CD8-positive, alpha-beta T cell (primary cell): ENCODE measurements at regions of chr4 and their contacts with region 1.

Region 1: GRCh38 chr4:184474263-184475095 is at the start of gene IRF2:
- DNase-seq: peak; percentile 91 to 99 (median 95)
- ATAC-seq: peak; percentile 82
- H3K4me3 ChIP-seq: peak within 1 kb of the TSS; percentile 78 to 93
- H3K4me3 Mint-ChIP-seq: peak within 1 kb of the TSS; percentile 98
- H3K27ac ChIP-seq: peak within 1 kb of the TSS; percentile 94 to 95
- H3K27ac Mint-ChIP-seq: peak within 1 kb of the TSS; percentile 99
- H3K4me1 ChIP-seq: peaks cover 38% of the 10 kb centered on the region
- H3K4me1 Mint-ChIP-seq: peaks cover 67% of the 10 kb centered on the region
- H3K27me3 ChIP-seq: no peaks in the 10 kb centered on the region
- H3K27me3 Mint-ChIP-seq: no peaks in the 10 kb centered on the region
- CTCF ChIP-seq: no peak
- total RNA-seq, gene IRF2: 7.9 to 9.3 TPM

Region 2: GRCh38 chr4:184395971-184396391 is 78.5 kb before region 1 on chr4:
- CTCF ChIA-PET with region 1: no interaction called
- POLR2A ChIA-PET with region 1: no interaction called
- intact Hi-C with region 1: no loop called
- DNase-seq: no peak
- ATAC-seq: no peak
- H3K4me3 ChIP-seq: no peak overlapping the region
- H3K4me3 Mint-ChIP-seq: no peak overlapping the region
- H3K27ac ChIP-seq: no peak overlapping the region
- H3K27ac Mint-ChIP-seq: no peak overlapping the region
- H3K4me1 ChIP-seq: no peaks in the 10 kb centered on the region
- H3K4me1 Mint-ChIP-seq: no peaks in the 10 kb centered on the region
- H3K27me3 ChIP-seq: no peaks in the 10 kb centered on the region
- H3K27me3 Mint-ChIP-seq: no peaks in the 10 kb centered on the region
- CTCF ChIP-seq: no peak

Region 3: DNA sequence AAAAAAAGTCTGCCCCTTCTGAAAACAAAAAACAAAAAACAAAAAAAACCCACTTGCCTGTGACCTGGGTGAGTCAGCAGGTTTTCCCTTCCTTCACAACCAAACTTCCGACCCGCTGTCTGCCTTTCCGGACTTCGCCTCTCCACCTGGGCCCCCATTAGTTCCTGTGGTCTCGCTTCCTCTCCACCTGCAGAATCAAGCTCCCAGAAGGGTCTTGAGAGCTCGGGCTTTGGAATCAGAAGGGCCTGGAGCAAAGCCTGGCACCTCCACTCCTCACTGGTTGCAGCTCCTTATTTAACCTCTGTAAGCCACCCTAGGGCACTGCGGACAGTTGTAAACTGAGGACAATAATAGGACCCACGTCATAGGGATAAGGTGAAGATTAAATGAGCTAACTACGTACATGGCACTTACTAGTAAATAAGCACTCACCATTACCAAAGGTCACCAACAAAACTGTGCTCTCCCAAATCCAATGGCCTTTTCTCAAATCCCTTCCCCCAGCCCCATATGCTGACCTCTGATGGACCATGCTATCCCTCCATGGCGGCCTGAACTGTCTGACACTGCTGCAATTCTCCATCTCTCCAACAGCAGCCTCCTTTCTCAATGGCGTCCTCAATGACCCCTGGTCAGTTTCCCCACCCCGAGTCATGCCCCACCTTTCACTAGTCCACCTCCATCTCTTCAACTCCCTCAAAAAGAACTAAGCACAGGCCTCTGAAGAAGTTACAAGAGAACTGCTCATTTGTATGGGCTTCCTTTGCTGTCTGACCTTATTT is 64.4 kb before region 1 on chr4:
- CTCF ChIA-PET with region 1: no interaction called
- POLR2A ChIA-PET with region 1: interaction called, 5 read pairs
- intact Hi-C with region 1: loop called (anchors 2 kb)
- DNase-seq: peak; percentile 3 to 74 (median 57)
- ATAC-seq: peak; percentile 71
- H3K4me3 ChIP-seq: no peak overlapping the region
- H3K4me3 Mint-ChIP-seq: peak overlapping the region; percentile 54
- H3K27ac ChIP-seq: peak overlapping the region in 1 of 2 experiments; percentile 54
- H3K27ac Mint-ChIP-seq: peak overlapping the region; percentile 86
- H3K4me1 ChIP-seq: peaks cover 18% of the 10 kb centered on the region
- H3K4me1 Mint-ChIP-seq: peaks cover 53% of the 10 kb centered on the region
- H3K27me3 ChIP-seq: no peaks in the 10 kb centered on the region
- H3K27me3 Mint-ChIP-seq: no peaks in the 10 kb centered on the region
- CTCF ChIP-seq: no peak

Region 4: DNA sequence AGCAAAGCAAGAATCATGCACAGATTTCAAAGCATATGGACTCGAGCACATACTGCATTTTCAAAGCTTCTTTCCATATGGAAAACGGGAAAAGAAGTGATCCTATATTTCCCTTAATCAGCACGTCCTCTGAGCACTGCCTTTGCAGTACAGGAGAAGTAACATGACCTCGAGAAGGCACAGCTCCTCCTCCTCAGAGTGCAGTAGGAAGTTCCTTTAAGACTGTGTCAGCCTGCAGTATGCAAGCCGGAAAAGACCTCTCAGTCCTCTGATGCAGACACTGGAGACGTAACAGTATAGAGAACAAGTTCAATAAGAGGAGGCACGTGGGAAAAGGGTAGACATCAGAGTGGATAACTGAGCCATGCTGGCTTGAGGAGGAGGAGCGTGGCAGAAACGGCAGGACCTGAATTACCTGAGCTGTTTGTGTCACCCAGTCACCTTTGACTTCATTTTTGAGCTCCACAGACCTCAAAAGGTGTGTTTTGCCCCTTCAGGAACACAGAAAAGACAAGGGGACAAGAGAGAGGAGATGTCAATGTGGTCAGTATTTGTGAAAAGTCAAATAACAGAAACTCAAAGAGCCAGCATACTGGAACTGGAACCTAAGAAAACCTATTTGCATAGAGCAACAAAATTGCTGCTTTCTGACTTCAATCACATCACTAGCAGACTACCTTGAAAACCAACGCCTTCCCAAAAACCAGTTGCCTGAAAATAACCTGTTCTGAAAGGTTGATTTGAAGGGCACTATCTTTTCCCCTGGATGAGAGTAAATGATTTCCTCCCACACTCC is 20.9 kb before region 1 on chr4:
- CTCF ChIA-PET with region 1: interaction called, 3 read pairs
- POLR2A ChIA-PET with region 1: interaction called, 7 read pairs
- intact Hi-C with region 1: loop called in 1 of 2 experiments (anchors 2 kb)
- DNase-seq: peak in 7 of 9 experiments; percentile 16 to 82 (median 57)
- ATAC-seq: peak; percentile 98
- H3K4me3 ChIP-seq: no peak overlapping the region
- H3K4me3 Mint-ChIP-seq: peak overlapping the region; percentile 40
- H3K27ac ChIP-seq: peak overlapping the region; percentile 25 to 78
- H3K27ac Mint-ChIP-seq: peak overlapping the region; percentile 97
- H3K4me1 ChIP-seq: peaks cover 35% of the 10 kb centered on the region
- H3K4me1 Mint-ChIP-seq: peaks cover 84% of the 10 kb centered on the region
- H3K27me3 ChIP-seq: no peaks in the 10 kb centered on the region
- H3K27me3 Mint-ChIP-seq: no peaks in the 10 kb centered on the region
- CTCF ChIP-seq: no peak

Region 5: GRCh38 chr4:184538023-184538599 is 63.6 kb after region 1 on chr4:
- CTCF ChIA-PET with region 1: interaction called, 4 read pairs
- POLR2A ChIA-PET with region 1: interaction called, 65 read pairs
- intact Hi-C with region 1: loop called (anchors 1 kb)
- DNase-seq: peak; percentile 38 to 88 (median 65)
- ATAC-seq: peak; percentile 45
- H3K4me3 ChIP-seq: peak overlapping the region; percentile 57 to 63
- H3K4me3 Mint-ChIP-seq: peak overlapping the region; percentile 91
- H3K27ac ChIP-seq: peak overlapping the region; percentile 84 to 90
- H3K27ac Mint-ChIP-seq: peak overlapping the region; percentile 100
- H3K4me1 ChIP-seq: peaks cover 33% of the 10 kb centered on the region
- H3K4me1 Mint-ChIP-seq: peaks cover 46% of the 10 kb centered on the region
- H3K27me3 ChIP-seq: no peaks in the 10 kb centered on the region
- H3K27me3 Mint-ChIP-seq: no peaks in the 10 kb centered on the region
- CTCF ChIP-seq: peak; percentile 36

Region 6: DNA sequence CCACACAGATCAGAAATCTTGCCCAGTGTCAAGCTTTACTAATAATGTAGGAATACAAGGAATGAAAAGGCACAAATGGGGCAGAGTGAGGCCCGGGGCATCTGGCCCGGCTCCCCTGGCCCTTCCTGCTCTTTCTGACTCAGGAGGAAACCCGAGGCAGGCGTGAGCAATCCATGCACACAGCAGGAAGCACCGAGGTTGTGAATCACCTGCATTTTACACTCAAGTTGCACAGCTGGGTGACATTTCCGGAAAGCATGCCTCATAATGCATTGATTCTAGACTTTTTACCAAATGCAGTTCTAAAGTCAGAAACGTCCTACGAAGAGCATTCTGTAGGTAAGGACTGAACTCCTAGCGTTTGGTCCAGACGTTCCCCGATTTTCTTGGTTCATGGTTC is 214.0 kb after region 1 on chr4:
- CTCF ChIA-PET with region 1: no interaction called
- POLR2A ChIA-PET with region 1: no interaction called
- intact Hi-C with region 1: no loop called
- DNase-seq: no peak
- ATAC-seq: no peak
- H3K4me3 ChIP-seq: no peak overlapping the region
- H3K4me3 Mint-ChIP-seq: no peak overlapping the region
- H3K27ac ChIP-seq: no peak overlapping the region
- H3K27ac Mint-ChIP-seq: no peak overlapping the region
- H3K4me1 ChIP-seq: no peaks in the 10 kb centered on the region
- H3K4me1 Mint-ChIP-seq: peaks cover 5% of the 10 kb centered on the region
- H3K27me3 ChIP-seq: no peaks in the 10 kb centered on the region
- H3K27me3 Mint-ChIP-seq: no peaks in the 10 kb centered on the region
- CTCF ChIP-seq: no peak

Region 7: DNA sequence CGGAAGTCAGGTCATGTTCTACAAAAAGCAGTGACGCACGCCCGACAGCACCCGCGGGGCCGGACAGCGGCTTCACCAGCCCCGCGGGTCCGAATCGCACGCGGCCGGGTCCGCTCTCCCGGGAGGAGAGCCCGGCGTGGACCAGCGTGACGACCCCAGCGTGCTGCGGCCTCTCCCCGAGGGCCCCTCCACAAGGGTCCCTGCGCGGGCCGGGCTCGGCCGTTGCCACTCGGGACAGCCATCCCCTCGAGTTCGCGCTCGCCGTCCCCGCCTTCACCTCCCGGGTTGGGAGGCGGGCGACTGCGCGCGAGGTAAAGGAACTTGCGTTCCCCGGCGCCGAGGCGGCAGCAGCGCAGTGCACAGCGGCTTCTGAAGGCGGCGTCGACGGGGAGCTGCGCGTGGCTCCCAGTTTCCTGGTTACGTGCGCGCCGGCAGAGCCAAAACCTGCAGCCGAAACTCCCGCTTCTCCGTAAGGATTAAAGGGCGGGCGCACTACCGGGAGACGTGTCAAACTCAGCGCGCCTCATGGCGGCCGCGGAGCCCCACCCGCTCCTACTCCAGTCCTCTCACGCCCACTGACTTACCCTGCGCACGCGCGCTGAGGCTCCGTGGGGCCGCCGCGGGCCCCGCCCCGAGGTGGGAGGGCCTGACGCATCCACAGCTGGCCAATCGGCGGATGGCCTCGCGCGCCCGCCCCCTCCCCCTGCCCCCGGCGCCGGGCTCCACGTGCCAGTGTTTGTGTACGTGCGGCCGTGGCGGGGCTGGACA is 921.7 kb after region 1 on chr4:
- CTCF ChIA-PET with region 1: no interaction called
- POLR2A ChIA-PET with region 1: no interaction called
- intact Hi-C with region 1: loop called in 1 of 2 experiments (anchors 10 kb)
- DNase-seq: peak; percentile 91 to 98 (median 95)
- ATAC-seq: peak; percentile 92
- H3K4me3 ChIP-seq: peak overlapping the region; percentile 73 to 95
- H3K4me3 Mint-ChIP-seq: peak overlapping the region; percentile 95
- H3K27ac ChIP-seq: peak overlapping the region; percentile 98 to 99
- H3K27ac Mint-ChIP-seq: peak overlapping the region; percentile 99
- H3K4me1 ChIP-seq: peaks cover 16% of the 10 kb centered on the region
- H3K4me1 Mint-ChIP-seq: peaks cover 20% of the 10 kb centered on the region
- H3K27me3 ChIP-seq: no peaks in the 10 kb centered on the region
- H3K27me3 Mint-ChIP-seq: no peaks in the 10 kb centered on the region
- CTCF ChIP-seq: no peak

Region 8: DNA sequence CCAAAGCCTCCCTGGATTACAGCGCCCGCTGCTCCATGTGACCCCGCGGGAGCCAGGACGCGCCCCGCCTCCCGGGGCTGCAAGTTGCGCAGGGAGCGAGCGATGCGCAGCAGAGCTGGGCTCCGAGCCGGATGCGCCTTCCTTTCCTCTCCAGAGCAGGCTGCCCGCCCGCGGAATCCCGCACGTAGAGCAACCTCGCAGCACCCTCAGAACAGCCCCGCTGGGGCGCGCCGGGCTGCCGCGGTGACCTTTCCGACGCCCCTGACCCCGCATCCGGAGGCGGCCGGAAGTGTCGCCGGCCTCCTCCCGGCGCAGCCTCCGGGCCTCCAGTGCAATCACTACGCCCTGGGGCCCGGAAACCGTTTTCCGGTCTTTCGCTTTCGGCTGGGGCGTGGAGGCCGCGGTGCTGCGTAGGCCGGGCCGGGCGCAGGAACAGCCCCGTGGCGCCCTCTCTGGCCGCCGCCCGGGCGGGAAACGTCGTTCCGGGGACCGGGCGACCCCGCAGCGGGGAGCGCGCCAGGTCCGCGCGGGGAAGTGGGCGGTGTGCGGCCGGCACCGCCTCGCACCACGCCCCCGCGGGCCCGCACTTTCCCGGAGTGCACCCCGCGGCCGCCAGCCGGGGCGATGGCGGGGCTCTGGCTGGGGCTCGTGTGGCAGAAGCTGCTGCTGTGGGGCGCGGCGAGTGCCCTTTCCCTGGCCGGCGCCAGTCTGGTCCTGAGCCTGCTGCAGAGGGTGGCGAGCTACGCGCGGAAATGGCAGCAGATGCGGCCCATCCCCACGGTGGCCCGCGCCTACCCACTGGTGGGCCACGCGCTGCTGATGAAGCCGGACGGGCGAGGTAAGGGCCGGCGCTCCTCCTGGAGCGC is 1717.0 kb after region 1 on chr4 and contains the start of gene CYP4V2:
- CTCF ChIA-PET with region 1: no interaction called
- POLR2A ChIA-PET with region 1: no interaction called
- intact Hi-C with region 1: loop called in 1 of 2 experiments (anchors 10 kb)
- DNase-seq: peak; percentile 64 to 92 (median 85)
- ATAC-seq: peak; percentile 80
- H3K4me3 ChIP-seq: peak within 1 kb of the TSS; percentile 73 to 85
- H3K4me3 Mint-ChIP-seq: peak within 1 kb of the TSS; percentile 90
- H3K27ac ChIP-seq: peak within 1 kb of the TSS; percentile 89 to 91
- H3K27ac Mint-ChIP-seq: peak within 1 kb of the TSS; percentile 98
- H3K4me1 ChIP-seq: peaks cover 25% of the 10 kb centered on the region
- H3K4me1 Mint-ChIP-seq: peaks cover 57% of the 10 kb centered on the region
- H3K27me3 ChIP-seq: no peaks in the 10 kb centered on the region
- H3K27me3 Mint-ChIP-seq: no peaks in the 10 kb centered on the region
- CTCF ChIP-seq: no peak
- total RNA-seq, gene CYP4V2: 7.9 to 9.9 TPM